ENCODE measurements at regions of chr9 and their contacts with region 1.

Region 1: DNA sequence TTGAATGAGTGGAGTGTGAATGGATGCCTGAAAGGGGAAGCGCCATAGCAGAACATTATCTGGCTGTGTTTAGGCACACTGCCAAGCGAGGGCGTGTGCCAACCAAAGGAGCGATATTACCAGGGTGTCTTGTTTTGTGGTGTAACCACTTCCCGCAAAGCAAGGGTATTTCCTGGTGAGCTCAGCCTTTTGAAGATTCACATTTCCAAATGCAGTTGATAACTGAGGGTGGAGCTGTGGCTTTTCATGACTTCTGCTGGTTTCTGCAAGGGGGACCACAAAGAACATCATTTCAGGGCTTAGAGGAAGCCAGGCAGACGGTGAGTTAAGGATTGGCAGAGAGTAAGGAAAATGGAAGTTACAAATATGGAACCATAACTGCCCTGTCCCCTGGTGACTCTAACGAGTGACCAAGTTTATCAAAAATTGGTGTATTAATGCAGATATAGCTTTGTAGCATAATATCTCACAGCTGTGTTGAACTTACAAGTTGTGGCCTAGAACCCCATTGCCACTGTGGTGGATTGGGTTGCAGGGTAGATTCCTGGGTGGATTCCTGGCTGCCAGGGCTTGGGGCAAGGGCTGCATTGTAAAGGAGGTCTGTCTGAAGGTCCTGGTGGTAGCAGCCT is 71.4 kb downstream of the RALGPS1 start:
- DNase-seq: peak; percentile 90
- ATAC-seq: peak; percentile 83
- H3K4me3 Mint-ChIP-seq: peak overlapping the region; percentile 13
- H3K27ac Mint-ChIP-seq: no peak overlapping the region
- H3K4me1 Mint-ChIP-seq: peaks cover 45% of the 10 kb centered on the region
- H3K27me3 Mint-ChIP-seq: peaks cover 76% of the 10 kb centered on the region

Region 2: GRCh38 chr9:126471084-126471624 is 514.8 kb before region 1 on chr9:
- CTCF ChIA-PET with region 1: no interaction called
- POLR2A ChIA-PET with region 1: no interaction called
- intact Hi-C with region 1: loop called in 1 of 2 experiments (anchors 10 kb)
- DNase-seq: peak; percentile 89
- ATAC-seq: peak; percentile 92
- H3K4me3 Mint-ChIP-seq: peak overlapping the region; percentile 39
- H3K27ac Mint-ChIP-seq: no peak overlapping the region
- H3K4me1 Mint-ChIP-seq: peaks cover 60% of the 10 kb centered on the region
- H3K27me3 Mint-ChIP-seq: peaks cover 6% of the 10 kb centered on the region

Region 3: DNA sequence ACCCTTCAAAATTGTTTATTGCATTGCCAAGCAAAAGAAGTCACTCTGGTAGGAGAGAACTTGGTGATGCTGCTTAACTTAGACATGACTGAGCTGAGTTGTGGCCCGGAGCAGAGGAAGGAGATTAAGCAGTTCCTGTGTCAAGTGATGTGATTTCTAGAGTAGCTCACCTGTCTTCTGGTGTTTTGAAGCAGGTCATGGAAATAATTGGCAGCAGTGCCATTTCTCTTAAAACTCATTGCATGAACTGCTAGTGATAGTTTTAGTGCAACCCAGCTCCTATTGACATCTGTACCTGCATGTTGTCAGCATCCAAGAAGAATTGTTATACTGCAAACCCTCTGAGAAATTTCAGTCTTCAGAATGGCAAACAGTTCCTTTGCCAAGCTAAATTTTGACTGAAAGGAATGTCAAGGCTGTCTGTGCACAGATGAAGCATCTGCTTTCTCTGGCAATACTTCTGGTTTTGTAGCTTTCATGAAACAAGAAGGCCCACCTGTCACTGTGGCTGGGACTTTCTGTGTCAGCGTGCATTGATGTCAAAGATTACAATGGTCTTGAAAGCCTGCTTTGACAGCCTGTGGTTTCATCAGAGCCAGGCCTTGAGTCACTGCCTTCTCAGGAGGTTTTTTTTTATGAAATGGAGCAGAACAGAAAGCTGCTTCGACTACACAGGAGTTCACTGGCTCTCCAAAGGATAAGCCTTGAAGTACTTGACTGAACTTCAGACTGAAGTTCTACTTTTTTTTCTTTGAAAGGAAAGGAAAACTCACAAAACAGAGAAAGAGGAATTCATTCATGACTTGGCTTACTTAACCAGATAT is 19.2 kb after region 1 on chr9:
- CTCF ChIA-PET with region 1: interaction called, 8 read pairs
- POLR2A ChIA-PET with region 1: interaction called, 17 read pairs
- intact Hi-C with region 1: loop called (anchors 1 kb)
- DNase-seq: peak; percentile 87
- ATAC-seq: peak; percentile 98
- H3K4me3 Mint-ChIP-seq: no peak overlapping the region
- H3K27ac Mint-ChIP-seq: no peak overlapping the region
- H3K4me1 Mint-ChIP-seq: peaks cover 24% of the 10 kb centered on the region
- H3K27me3 Mint-ChIP-seq: peaks cover 45% of the 10 kb centered on the region

Region 4: DNA sequence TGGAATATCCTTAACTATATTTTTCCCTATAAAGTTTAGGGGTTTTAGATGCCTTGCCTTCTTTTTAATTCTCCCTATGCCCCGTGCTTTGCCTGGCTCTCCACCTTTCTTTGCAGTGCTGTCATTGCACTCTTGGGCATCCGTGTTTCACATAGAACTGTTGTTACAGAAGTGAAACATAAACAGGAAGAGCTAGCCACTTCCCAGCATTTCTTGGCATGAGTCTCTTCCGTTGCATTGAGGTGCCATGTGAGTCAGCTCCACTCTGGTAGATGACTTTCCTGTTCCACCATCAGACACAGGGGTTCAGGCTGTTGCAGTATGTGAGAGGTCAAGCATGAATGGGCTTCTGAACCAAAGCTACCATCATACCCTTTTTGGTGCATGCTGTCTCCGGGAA is 63.1 kb after region 1 on chr9:
- CTCF ChIA-PET with region 1: no interaction called
- POLR2A ChIA-PET with region 1: no interaction called
- intact Hi-C with region 1: loop called (anchors 2 to 5 kb)
- DNase-seq: peak; percentile 59
- ATAC-seq: peak; percentile 96
- H3K4me3 Mint-ChIP-seq: no peak overlapping the region
- H3K27ac Mint-ChIP-seq: no peak overlapping the region
- H3K4me1 Mint-ChIP-seq: peaks cover 21% of the 10 kb centered on the region
- H3K27me3 Mint-ChIP-seq: peaks cover 2% of the 10 kb centered on the region

Region 5: GRCh38 chr9:127154390-127155191 is 168.6 kb after region 1 on chr9:
- CTCF ChIA-PET with region 1: no interaction called
- POLR2A ChIA-PET with region 1: no interaction called
- intact Hi-C with region 1: loop called in 1 of 2 experiments (anchors 2 kb)
- DNase-seq: peak; percentile 50
- ATAC-seq: peak; percentile 80
- H3K4me3 Mint-ChIP-seq: no peak overlapping the region
- H3K27ac Mint-ChIP-seq: peak overlapping the region; percentile 9
- H3K4me1 Mint-ChIP-seq: peaks cover 14% of the 10 kb centered on the region
- H3K27me3 Mint-ChIP-seq: peaks cover 8% of the 10 kb centered on the region

Region 6: DNA sequence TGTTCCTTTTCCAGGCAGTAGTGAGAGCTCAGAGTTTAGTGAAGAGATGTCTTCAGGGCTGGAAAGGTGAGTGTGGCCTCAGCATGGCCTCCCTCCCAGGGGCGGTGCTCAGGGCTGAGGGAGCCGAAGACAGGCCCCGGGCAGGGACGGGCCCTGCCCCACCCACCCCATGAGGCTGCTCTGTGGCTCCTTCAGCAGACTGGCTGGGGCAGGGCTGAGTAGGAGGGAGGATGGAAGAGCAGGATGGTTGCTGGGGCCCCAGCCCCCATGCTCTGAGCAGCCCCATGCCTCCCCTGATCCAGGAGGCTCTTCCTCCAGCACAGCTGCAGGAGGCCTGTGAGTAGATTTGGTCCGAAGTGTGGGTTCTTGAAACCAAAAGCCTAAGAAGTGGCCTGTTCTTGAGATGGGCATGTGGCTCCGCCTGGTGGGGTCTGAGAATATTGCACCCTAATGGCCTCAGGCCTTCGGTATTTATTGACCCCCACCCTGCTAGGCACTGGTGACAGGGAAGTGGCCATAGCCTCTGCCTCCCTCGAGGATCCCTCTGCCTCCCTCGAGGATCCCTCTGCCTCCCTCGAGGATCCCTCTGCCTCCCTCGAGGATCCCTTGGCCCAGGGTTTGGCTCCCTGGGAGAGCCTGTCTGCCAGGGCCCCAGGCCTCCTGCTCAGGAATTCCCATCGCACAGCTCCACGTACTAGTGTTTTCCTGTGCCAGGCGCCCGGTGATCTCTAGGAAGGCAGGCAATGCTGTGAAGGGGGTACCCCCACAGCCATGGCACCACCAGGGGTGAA is 213.2 kb after region 1 on chr9:
- CTCF ChIA-PET with region 1: interaction called, 10 read pairs
- POLR2A ChIA-PET with region 1: no interaction called
- intact Hi-C with region 1: no loop called
- DNase-seq: peak; percentile 87
- ATAC-seq: peak; percentile 79
- H3K4me3 Mint-ChIP-seq: no peak overlapping the region
- H3K27ac Mint-ChIP-seq: no peak overlapping the region
- H3K4me1 Mint-ChIP-seq: peaks cover 4% of the 10 kb centered on the region
- H3K27me3 Mint-ChIP-seq: peaks cover 5% of the 10 kb centered on the region

Region 7: GRCh38 chr9:127388037-127388855 is 402.3 kb after region 1 on chr9:
- CTCF ChIA-PET with region 1: no interaction called
- POLR2A ChIA-PET with region 1: no interaction called
- intact Hi-C with region 1: loop called (anchors 1 to 5 kb)
- DNase-seq: peak; percentile 94
- ATAC-seq: peak; percentile 97
- H3K4me3 Mint-ChIP-seq: peak overlapping the region; percentile 3
- H3K27ac Mint-ChIP-seq: peak overlapping the region; percentile 81
- H3K4me1 Mint-ChIP-seq: peaks cover 20% of the 10 kb centered on the region
- H3K27me3 Mint-ChIP-seq: peaks cover 68% of the 10 kb centered on the region

Measured in activated CD4-positive, alpha-beta T cell treated with anti-CD3 and anti-CD28 coated beads for 36 hours (primary cell).